ENCODE measurements at regions of chr16 and their contacts with region 1.

Region 1: GRCh38 chr16:2500918-2501750 is 12.6 kb upstream of the ATP6V0C start:
- DNase-seq: peak; percentile 84 to 94 (median 88)
- H3K4me3 ChIP-seq: peak overlapping the region in 55 of 59 donors; percentile 7 to 63 (median 42)
- H3K27ac ChIP-seq: peak overlapping the region in 58 of 59 donors; percentile 21 to 93 (median 82)
- H3K27me3 ChIP-seq: no peaks in the 10 kb centered on the region
- CTCF ChIP-seq: peak; percentile 90 to 100 (median 99)

Region 2: DNA sequence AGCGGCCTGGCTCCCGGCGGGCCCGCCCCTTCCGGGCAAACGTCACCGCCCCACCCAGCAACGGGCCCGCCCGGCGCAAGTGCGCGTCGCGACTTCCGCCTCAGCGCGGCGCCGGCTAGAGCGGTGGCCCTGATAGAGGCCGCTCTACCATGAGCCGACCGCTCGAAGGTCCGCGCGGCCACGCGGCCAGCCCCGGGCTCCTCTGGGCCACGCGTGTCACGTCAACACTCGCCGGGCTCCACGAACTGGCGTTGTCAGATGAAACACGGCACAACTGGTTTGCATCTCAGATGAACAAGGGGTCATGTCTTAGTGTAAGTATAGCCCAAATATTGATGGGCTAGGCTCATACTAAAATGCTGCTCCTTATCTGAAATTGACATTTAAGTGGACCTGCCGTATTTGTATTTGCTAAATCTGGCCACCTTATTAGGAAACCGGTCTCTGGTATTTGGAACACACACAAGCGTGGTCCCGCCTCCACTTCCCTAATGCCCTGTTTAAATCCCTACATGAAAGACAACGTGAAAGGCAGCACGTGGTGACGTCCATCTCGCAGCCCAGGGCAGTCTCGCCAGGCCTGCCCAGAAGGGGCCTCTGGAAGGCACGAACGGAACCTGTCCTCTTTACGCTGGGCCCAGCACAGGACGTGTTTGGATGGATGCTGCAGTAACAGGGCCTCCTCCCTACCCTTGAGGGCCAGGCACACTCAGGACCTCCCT is 491.2 kb before region 1 on chr16 and contains the start of gene ZNF598:
- intact Hi-C with region 1: loop called in 1 of 2 experiments (anchors 10 kb)
- DNase-seq: peak; percentile 65 to 92 (median 80)
- H3K4me3 ChIP-seq: peak within 1 kb of the TSS; percentile 65 to 99 (median 87)
- H3K27ac ChIP-seq: peak within 1 kb of the TSS in 57 of 59 donors; percentile 24 to 93 (median 83)
- H3K27me3 ChIP-seq: no peaks in the 10 kb centered on the region
- CTCF ChIP-seq: peak in 36 of 56 donors; percentile 8 to 59 (median 30)
- total RNA-seq, gene ZNF598: 16.4 to 45.4 (median 29.2) TPM

Region 3: GRCh38 chr16:2340564-2341455 is 160.3 kb before region 1 on chr16 and contains the start of gene ABCA3:
- intact Hi-C with region 1: loop called (anchors 1 kb)
- DNase-seq: peak; percentile 82 to 97 (median 90)
- H3K4me3 ChIP-seq: peak within 1 kb of the TSS; percentile 68 to 97 (median 87)
- H3K27ac ChIP-seq: peak within 1 kb of the TSS; percentile 44 to 97 (median 92)
- H3K27me3 ChIP-seq: no peaks in the 10 kb centered on the region
- CTCF ChIP-seq: peak; percentile 94 to 100 (median 100)
- total RNA-seq, gene ABCA3: 75.2 to 141 (median 103) TPM

Region 4: GRCh38 chr16:2447920-2448583 is 53.1 kb before region 1 on chr16:
- intact Hi-C with region 1: no loop called
- DNase-seq: no peak
- H3K4me3 ChIP-seq: no peak overlapping the region
- H3K27ac ChIP-seq: no peak overlapping the region
- H3K27me3 ChIP-seq: no peaks in the 10 kb centered on the region
- CTCF ChIP-seq: no peak

Region 5: GRCh38 chr16:2459647-2460390 is 41.3 kb before region 1 on chr16 and contains the start of gene TEDC2:
- intact Hi-C with region 1: loop called in 1 of 2 experiments (anchors 5 kb)
- DNase-seq: peak; percentile 85 to 98 (median 96)
- H3K4me3 ChIP-seq: peak within 1 kb of the TSS; percentile 53 to 94 (median 75)
- H3K27ac ChIP-seq: peak within 1 kb of the TSS in 18 of 59 donors; percentile 3 to 77 (median 49)
- H3K27me3 ChIP-seq: no peaks in the 10 kb centered on the region
- CTCF ChIP-seq: peak in 17 of 56 donors; percentile 6 to 53 (median 19)
- total RNA-seq, gene TEDC2: 1.9 to 10.8 (median 5.0) TPM